Activated T-helper 1 cell treated with anti-CD3 and anti-CD28 coated beads, Interleukin-12 subunit alpha, Interleukin-12 subunit beta, Interleukin-2, Interleukin-4 antibody, amounts not matched to agents 30 ng/mL and 10 ng/mL and 1 ng/mL, durations not matched to agents 14 hours and 24 hours and 36 hours (primary cell): ENCODE measurements at regions of chr12 and their contacts with region 1.

Region 1: DNA sequence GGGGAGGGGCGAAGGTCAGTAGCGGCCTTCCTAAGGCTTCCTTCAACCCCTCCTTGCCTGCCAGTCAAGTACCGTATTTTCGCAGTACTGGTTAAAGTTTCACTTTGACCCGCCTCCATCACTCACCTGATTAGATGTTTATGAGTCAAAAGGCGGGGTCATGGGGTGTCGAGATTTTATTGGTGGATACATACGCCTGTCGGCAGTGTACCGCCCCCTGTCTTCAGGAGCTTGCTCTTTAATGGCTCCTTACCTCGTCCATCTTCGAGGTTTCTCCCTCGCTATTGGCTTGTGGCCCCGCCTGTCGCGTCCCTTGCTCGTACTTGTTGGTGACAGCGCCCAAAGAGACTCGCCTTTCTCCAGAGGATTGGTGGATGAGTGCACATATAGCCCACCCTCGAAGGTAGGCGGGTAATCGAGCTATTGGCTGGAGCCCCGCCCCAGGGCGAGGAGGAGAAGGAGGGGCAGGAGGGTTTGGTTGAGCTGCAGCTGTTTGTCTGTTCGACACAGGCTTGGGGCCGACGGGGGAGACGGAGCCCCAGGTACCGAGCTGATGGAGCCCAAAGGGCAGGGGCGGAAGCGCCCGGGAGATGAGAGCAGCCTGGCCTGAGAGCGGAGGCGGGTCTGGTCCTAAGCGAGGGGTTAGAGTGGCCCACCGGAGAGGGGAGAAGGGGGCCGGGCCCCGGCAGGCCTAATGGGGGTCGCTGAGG is at the start of gene RAB5B:
- DNase-seq: peak; percentile 98
- H3K4me3 Mint-ChIP-seq: no peak within 1 kb of the TSS
- H3K27ac Mint-ChIP-seq: no peak within 1 kb of the TSS
- H3K4me1 Mint-ChIP-seq: peaks cover 20% of the 10 kb centered on the region
- H3K27me3 Mint-ChIP-seq: no peaks in the 10 kb centered on the region
- total RNA-seq, gene RAB5B: 42.6 and 47.0 TPM in 2 replicates

Region 2: DNA sequence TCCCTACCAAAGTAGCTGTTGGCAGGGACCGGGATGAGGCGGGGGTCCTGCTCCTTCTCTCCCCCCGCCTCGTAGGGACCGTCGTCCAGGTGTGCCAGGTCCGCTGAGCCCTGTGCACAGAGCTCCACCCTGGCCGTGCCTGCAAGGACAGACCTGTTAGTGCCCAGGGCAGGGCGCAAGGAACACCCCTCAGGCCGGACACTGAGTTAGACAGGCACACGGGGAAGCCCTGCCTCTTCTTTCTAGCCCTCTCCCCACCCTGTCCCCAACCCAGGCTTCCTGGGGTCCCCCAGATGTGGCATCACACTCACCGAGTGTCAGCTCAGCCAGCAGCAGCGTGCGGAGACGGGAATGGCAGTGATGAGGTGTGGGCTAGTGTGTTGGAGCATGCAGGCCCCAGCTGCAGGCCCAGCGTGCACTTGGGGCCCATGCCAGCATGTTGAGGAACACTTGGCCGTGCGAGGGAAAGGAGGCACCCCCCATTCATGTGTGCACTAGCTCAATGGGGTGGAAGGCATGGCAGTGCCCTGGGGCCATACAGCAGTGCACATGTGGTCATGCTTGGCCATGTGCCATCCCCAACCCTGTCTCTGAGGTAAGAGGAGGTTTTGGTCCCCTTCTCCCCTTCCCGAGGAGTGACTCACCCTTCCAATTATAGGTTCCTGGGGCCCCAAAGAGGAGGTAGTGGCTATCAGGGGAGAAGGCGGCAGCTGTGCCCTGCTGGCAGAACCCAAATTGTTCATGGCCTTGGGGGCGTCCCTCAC is 273.3 kb before region 1 on chr12:
- intact Hi-C with region 1: no loop called
- DNase-seq: no peak
- H3K4me3 Mint-ChIP-seq: no peak overlapping the region
- H3K27ac Mint-ChIP-seq: no peak overlapping the region
- H3K4me1 Mint-ChIP-seq: no peaks in the 10 kb centered on the region
- H3K27me3 Mint-ChIP-seq: peaks cover 13% of the 10 kb centered on the region

Region 3: DNA sequence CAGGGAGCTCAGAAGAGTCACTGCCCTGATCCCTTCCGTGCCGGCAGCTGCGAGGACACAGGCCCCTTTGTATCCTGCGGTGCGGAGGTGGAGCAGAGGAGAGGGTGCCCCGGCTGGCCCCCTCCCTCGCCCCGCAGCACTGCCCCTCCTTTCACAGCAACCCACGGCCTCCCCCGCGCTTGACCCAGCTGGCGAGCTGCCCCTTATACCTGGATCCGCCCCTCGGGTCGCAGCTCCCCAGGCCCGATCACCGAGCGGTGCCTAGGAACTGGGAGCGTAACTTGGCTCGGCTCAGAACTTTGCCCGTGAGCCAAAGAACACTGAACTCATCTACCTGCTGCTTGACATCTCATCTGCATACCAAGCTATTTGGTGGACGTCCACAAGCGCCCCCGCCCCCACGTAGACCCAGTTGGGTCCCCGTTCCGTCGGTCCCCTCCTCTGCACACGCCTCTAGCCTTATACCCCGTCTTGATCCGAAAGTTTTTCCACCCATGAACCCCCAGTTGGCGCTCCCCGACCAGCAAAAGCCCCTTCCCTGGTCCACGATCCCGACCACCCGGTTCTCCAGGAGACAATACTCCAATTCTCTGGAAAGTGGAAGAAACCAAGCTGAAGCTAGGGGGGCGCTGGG is 143.7 kb before region 1 on chr12:
- intact Hi-C with region 1: loop called (anchors 1 kb)
- DNase-seq: peak; percentile 22
- H3K4me3 Mint-ChIP-seq: peak overlapping the region; percentile 98
- H3K27ac Mint-ChIP-seq: peak overlapping the region; percentile 92
- H3K4me1 Mint-ChIP-seq: peaks cover 37% of the 10 kb centered on the region
- H3K27me3 Mint-ChIP-seq: no peaks in the 10 kb centered on the region

Region 4: GRCh38 chr12:55885113-55885512 is 88.6 kb before region 1 on chr12:
- intact Hi-C with region 1: no loop called
- DNase-seq: no peak
- H3K4me3 Mint-ChIP-seq: no peak overlapping the region
- H3K27ac Mint-ChIP-seq: no peak overlapping the region
- H3K4me1 Mint-ChIP-seq: peaks cover 16% of the 10 kb centered on the region
- H3K27me3 Mint-ChIP-seq: peaks cover 3% of the 10 kb centered on the region

Region 5: GRCh38 chr12:56007564-56008559 is 34.1 kb after region 1 on chr12:
- intact Hi-C with region 1: loop called (anchors 1 kb)
- DNase-seq: peak; percentile 55
- H3K4me3 Mint-ChIP-seq: peak overlapping the region; percentile 92
- H3K27ac Mint-ChIP-seq: peak overlapping the region; percentile 88
- H3K4me1 Mint-ChIP-seq: peaks cover 32% of the 10 kb centered on the region
- H3K27me3 Mint-ChIP-seq: peaks cover 3% of the 10 kb centered on the region

Region 6: GRCh38 chr12:56104109-56104814 is 130.5 kb after region 1 on chr12 and contains the start of gene PA2G4:
- intact Hi-C with region 1: loop called (anchors 1 kb)
- DNase-seq: peak; percentile 99
- H3K4me3 Mint-ChIP-seq: peak within 1 kb of the TSS; percentile 98
- H3K27ac Mint-ChIP-seq: peak within 1 kb of the TSS; percentile 89
- H3K4me1 Mint-ChIP-seq: peaks cover 49% of the 10 kb centered on the region
- H3K27me3 Mint-ChIP-seq: no peaks in the 10 kb centered on the region
- total RNA-seq, gene PA2G4: 404 and 419 TPM in 2 replicates

Region 7: GRCh38 chr12:56998981-56999380 is 1025.2 kb after region 1 on chr12:
- intact Hi-C with region 1: loop called (anchors 5 kb)
- DNase-seq: peak; percentile 22
- H3K4me3 Mint-ChIP-seq: peak overlapping the region; percentile 75
- H3K27ac Mint-ChIP-seq: peak overlapping the region; percentile 89
- H3K4me1 Mint-ChIP-seq: peaks cover 40% of the 10 kb centered on the region
- H3K27me3 Mint-ChIP-seq: no peaks in the 10 kb centered on the region